Mammary epithelial cell (primary cell): ENCODE measurements at regions of chr3 and their contacts with region 1.

Region 1: DNA sequence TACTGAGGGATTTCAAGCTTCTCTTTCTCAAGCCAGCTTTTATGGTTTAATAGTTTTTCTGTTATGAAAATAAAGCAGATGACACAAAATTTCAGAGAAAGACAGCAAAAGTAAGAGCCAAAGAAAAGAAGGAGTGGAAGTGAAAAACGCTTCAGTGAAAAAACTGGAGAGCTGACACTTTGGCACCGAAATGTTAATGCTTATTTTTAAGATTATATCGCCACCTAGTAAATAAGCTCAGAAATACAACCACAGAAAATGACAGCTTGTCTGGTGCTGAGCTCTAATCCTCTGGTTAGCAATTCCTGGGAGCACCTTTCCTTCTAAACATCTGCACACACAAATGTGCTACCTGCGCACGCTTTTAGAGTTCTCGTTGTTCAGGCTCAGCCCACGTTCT is 101.6 kb downstream of the ZPLD1 start:
- DNase-seq: peak; percentile 39
- H3K4me3 ChIP-seq: no peak overlapping the region
- H3K27ac ChIP-seq: no peak overlapping the region
- H3K4me1 ChIP-seq: no peaks in the 10 kb centered on the region
- H3K27me3 ChIP-seq: no peaks in the 10 kb centered on the region
- CTCF ChIP-seq: peak; percentile 42 to 55

Region 2: GRCh38 chr3:101703169-101703568 is 833.3 kb before region 1 on chr3:
- CTCF ChIA-PET with region 1: no interaction called
- dilution Hi-C with region 1: no loop called
- in situ Hi-C with region 1: no loop called
- intact Hi-C with region 1: loop called (anchors 10 kb)
- DNase-seq: peak; percentile 80
- H3K4me3 ChIP-seq: no peak overlapping the region
- H3K27ac ChIP-seq: peak overlapping the region; percentile 66
- H3K4me1 ChIP-seq: peaks cover 14% of the 10 kb centered on the region
- H3K27me3 ChIP-seq: no peaks in the 10 kb centered on the region
- CTCF ChIP-seq: no peak

Region 3: GRCh38 chr3:101803173-101803782 is 733.2 kb before region 1 on chr3:
- CTCF ChIA-PET with region 1: interaction called, 3 read pairs
- dilution Hi-C with region 1: loop called (anchors 25 kb)
- in situ Hi-C with region 1: loop called (anchors 5 to 25 kb)
- intact Hi-C with region 1: no loop called
- DNase-seq: peak; percentile 50
- H3K4me3 ChIP-seq: no peak overlapping the region
- H3K27ac ChIP-seq: no peak overlapping the region
- H3K4me1 ChIP-seq: no peaks in the 10 kb centered on the region
- H3K27me3 ChIP-seq: no peaks in the 10 kb centered on the region
- CTCF ChIP-seq: peak; percentile 83 to 92

Region 4: GRCh38 chr3:101809178-101810021 is 727.1 kb before region 1 on chr3:
- CTCF ChIA-PET with region 1: no interaction called
- dilution Hi-C with region 1: loop called (anchors 25 kb)
- in situ Hi-C with region 1: loop called (anchors 5 to 25 kb)
- intact Hi-C with region 1: loop called (anchors 1 kb)
- DNase-seq: no peak
- H3K4me3 ChIP-seq: no peak overlapping the region
- H3K27ac ChIP-seq: no peak overlapping the region
- H3K4me1 ChIP-seq: peaks cover 5% of the 10 kb centered on the region
- H3K27me3 ChIP-seq: no peaks in the 10 kb centered on the region
- CTCF ChIP-seq: peak; percentile 59 to 60

Region 5: DNA sequence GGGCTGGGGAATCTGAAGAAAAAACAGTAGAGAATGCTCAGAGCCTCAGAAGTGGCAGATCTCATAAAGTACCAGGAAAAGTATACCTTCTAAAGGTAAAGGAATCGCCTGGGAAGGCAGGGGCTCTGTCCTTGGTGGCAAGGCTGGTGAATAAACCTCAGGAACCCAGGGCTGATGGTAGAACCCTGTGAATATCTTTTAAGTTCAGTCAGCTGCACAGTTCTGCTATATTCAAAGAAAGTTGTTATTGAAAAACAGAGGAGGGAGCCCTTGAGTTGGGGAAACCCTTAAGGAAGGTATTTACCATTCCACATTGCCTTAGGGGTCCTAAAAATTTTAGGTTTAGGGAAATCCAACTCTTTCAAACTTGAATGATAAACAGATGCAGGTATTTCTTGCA is 70.5 kb before region 1 on chr3:
- CTCF ChIA-PET with region 1: no interaction called
- dilution Hi-C with region 1: no loop called
- in situ Hi-C with region 1: no loop called
- intact Hi-C with region 1: loop called (anchors 5 kb)
- DNase-seq: no peak
- H3K4me3 ChIP-seq: no peak overlapping the region
- H3K27ac ChIP-seq: no peak overlapping the region
- H3K4me1 ChIP-seq: no peaks in the 10 kb centered on the region
- H3K27me3 ChIP-seq: no peaks in the 10 kb centered on the region
- CTCF ChIP-seq: peak in 1 of 2 donors; percentile 38